Right lobe of liver (tissue), 6 donors: ENCODE measurements at regions of chr19 and their contacts with region 1.

Region 1: GRCh38 chr19:47713046-47714021 is at the start of gene EHD2:
- DNase-seq: peak in 2 of 3 donors; percentile 64 to 68
- ATAC-seq: peak; percentile 84 to 93 (median 90)
- H3K4me3 ChIP-seq: peak within 1 kb of the TSS; percentile 28 to 43 (median 40)
- H3K27ac ChIP-seq: peak within 1 kb of the TSS in 2 of 3 donors; percentile 37 to 64
- H3K4me1 ChIP-seq: no peaks in the 10 kb centered on the region
- H3K27me3 ChIP-seq: no peaks in the 10 kb centered on the region
- CTCF ChIP-seq: peak; percentile 89 to 96 (median 92)
- POLR2A ChIP-seq: peak; percentile 51
- total RNA-seq, gene EHD2: 3.6 to 20.2 (median 12.8) TPM

Region 2: GRCh38 chr19:47779524-47780214 is 66.3 kb after region 1 on chr19:
- intact Hi-C with region 1: loop called in 1 of 2 experiments (anchors 10 kb)
- DNase-seq: no peak
- ATAC-seq: no peak
- H3K4me3 ChIP-seq: peak overlapping the region; percentile 72 to 93 (median 90)
- H3K27ac ChIP-seq: peak overlapping the region; percentile 98 to 99 (median 98)
- H3K4me1 ChIP-seq: peaks cover 0 to 27% (median 0%) of the 10 kb centered on the region in 4 donors
- H3K27me3 ChIP-seq: no peaks in the 10 kb centered on the region
- CTCF ChIP-seq: no peak
- POLR2A ChIP-seq: no peak